ENCODE measurements at regions of chr15 and their contacts with region 1.

Region 1: DNA sequence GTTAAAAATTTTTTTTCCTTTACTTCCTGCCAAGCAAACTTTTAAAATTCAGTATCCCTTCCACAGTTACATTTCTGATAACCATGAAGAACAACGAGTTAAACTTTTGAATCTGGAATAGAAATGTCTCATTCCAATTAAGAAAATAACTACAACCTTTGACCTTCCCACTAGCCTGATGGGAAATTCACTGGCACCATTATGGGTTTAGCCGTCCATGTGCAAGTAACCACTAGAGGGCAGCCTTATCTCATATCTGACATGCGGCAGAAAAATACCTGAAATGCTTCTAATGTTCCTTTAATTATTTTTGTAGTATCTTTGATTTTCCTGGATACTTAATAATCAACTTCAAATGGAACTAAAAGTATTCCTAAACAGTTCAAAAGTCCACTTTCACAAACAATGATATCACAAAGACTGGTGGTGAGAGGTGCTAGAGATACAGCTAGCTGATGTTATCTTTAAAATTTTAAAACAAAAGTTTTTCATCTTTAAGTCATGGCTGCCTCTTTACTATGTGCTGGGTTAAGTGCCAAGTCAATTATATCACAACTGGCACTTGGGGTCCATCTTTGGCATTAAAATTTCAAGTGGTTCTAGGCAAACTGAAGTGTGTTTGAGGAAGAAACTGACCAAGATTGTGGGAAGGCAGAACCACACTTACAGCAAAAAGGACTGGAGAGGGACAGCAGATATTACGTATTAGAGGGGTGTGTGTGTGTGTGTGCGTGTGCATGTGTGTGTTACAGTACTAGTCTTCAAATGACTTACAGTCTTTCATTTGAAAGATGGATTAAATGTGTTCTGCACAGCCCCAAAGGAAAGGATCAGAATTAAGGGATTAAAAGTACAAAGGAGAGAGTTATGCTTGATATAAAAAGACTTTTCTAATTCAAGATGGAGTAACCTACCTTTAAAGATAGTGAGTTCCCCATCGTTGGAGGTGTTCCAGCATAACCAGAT is 107.1 kb upstream of the ICE2 start:
- DNase-seq: peak; percentile 42
- H3K4me3 Mint-ChIP-seq: peak overlapping the region; percentile 68
- H3K27ac Mint-ChIP-seq: peak overlapping the region; percentile 82
- H3K4me1 Mint-ChIP-seq: peaks cover 80% of the 10 kb centered on the region
- H3K27me3 Mint-ChIP-seq: peaks cover 14% of the 10 kb centered on the region

Region 2: GRCh38 chr15:60397772-60398445 is 188.1 kb before region 1 on chr15 and contains the start of gene ANXA2:
- intact Hi-C with region 1: loop called (anchors 5 kb)
- DNase-seq: peak; percentile 81
- H3K4me3 Mint-ChIP-seq: peak within 1 kb of the TSS; percentile 96
- H3K27ac Mint-ChIP-seq: peak within 1 kb of the TSS; percentile 97
- H3K4me1 Mint-ChIP-seq: peaks cover 63% of the 10 kb centered on the region
- H3K27me3 Mint-ChIP-seq: peaks cover under 1% of the 10 kb centered on the region
- total RNA-seq, gene ANXA2: 262 and 267 TPM in 2 replicates

Region 3: DNA sequence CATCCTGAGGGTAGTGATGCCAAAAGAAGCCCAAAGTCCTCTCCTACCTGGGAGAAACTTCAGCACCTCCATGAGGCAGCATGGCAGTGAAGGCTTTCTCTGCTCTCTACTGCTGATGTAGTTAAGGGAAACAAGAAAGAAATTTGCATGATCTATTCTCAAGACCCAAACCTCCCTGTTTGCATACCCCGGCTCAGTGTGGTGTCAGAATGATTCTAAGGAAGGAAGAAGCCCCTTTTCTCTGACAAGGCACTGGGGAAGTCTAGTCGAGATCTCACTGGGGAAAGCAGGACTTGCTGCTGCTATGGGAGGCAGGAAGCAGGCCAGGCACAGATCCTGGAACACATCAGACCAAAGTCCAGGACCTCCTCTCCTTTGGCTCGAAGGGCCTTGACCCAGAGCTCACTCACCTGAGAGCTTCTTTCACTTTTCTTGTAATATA is 17.7 kb before region 1 on chr15:
- intact Hi-C with region 1: loop called (anchors 2 kb)
- DNase-seq: no peak
- H3K4me3 Mint-ChIP-seq: peak overlapping the region; percentile 4
- H3K27ac Mint-ChIP-seq: peak overlapping the region; percentile 51
- H3K4me1 Mint-ChIP-seq: peaks cover 54% of the 10 kb centered on the region
- H3K27me3 Mint-ChIP-seq: peaks cover 2% of the 10 kb centered on the region

Region 4: DNA sequence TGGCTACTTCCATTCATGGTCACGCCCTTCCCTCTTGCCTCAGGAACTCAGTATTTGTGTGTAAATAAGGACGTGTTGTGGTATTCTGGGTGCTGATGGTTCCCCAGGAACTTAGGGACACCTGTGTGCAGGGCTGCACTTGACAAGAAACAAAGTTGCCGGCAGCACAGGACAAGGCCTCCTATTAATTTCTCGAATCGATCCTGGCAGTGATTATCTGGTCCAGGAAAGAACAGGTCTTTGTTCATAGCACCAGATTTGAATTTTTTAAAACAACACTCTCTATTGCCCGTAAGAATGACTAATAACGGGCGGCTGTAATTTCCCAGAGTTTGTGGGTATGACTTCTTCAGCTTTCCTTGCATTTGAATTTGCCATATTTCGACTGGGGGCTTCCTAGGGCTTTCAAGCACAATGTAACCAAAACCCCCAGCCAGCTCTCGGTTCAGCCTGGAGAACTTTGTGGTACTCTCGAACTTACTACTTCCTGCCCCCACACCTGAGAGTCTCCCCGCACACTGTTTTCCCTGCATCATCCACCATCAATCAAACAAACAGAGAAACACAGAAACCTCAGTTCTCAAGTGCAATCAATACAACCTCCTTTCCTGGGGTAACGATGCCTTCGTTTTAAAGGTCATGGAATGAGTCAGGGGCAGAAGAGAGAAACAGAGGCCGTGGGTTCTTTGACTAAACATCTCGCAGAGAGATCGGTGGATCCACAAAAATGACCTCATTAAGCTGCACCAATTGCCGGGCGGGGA is 134.6 kb after region 1 on chr15:
- intact Hi-C with region 1: loop called (anchors 2 kb)
- DNase-seq: peak; percentile 39
- H3K4me3 Mint-ChIP-seq: peak overlapping the region; percentile 28
- H3K27ac Mint-ChIP-seq: peak overlapping the region; percentile 90
- H3K4me1 Mint-ChIP-seq: peaks cover 53% of the 10 kb centered on the region
- H3K27me3 Mint-ChIP-seq: peaks cover 8% of the 10 kb centered on the region

Region 5: DNA sequence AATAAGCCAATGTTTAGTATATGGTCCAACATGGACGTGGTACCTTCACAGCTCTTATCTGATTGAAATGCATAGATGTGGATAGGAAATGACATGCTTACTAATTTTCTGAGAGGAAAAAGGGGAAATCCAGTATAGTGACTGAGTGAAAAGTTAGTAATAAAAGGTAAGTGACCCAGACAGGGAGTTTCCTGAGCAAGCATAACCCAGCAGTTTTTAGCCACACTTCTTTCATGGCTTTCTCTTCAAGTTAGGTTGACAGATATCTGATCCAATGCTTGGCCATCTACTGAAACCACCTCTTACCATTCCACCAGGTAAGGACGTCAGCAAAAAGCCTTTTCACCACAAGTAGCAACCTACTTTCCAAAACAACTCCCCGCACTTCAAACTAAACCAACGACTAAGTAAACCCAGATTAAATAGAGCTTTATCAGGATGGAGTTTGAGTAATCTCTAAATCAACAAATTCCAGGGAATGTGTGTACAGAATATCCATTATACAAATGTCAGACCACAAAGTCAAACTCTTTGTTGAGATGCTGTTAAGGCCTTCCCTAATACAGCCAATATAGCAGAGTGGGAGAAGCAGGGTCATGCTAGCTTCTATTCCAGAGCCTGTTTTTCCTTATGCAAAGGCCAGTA is 313.4 kb after region 1 on chr15:
- intact Hi-C with region 1: loop called (anchors 5 kb)
- DNase-seq: no peak
- H3K4me3 Mint-ChIP-seq: no peak overlapping the region
- H3K27ac Mint-ChIP-seq: peak overlapping the region; percentile 64
- H3K4me1 Mint-ChIP-seq: peaks cover 52% of the 10 kb centered on the region
- H3K27me3 Mint-ChIP-seq: peaks cover 14% of the 10 kb centered on the region